ENCODE measurements at regions of chr5 and their contacts with region 1.

Region 1: GRCh38 chr5:25701936-25702335 is 1057.2 kb upstream of the CDH10 start:
- DNase-seq: no peak

Region 2: DNA sequence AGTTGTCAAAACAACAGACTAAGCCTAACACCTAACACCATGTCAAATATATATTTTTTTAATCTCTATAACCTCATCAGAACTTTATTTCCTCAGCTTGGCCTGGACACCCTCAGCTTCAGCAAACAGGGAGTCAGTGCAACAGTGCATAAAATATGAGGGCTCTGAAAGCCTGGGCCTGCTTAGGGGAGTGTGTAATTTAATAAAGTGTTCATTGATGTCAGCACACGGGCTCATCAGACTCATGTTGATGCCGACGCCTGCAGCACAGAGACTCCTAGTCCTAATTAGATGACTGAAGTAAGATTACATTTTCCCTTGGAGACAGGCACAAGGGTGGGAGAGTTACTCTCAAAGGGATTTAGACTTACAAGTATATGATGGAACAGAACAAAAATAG is 1095.0 kb before region 1 on chr5:
- intact Hi-C with region 1: no loop called
- DNase-seq: no peak

Region 3: GRCh38 chr5:25489834-25490538 is 211.9 kb before region 1 on chr5:
- intact Hi-C with region 1: no loop called
- DNase-seq: no peak

Region 4: DNA sequence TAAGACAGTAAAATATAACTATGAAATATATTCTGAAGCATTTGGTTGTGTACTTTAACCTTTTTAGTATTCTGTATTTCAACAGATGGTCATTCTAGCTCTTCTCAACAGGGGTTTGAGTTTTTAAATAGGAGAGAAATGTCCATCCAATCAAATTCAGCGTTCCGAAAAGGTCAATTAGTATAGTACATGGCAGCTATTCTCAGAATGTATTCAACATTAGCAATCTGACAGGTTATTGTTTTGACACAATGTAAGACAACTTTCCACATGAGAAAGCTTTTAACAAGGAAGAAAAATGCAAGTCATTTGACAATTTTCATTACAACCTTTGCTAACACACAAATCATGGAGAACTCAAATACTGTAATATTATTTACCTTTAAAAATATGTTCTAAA is 60.8 kb before region 1 on chr5:
- intact Hi-C with region 1: loop called in 1 of 2 experiments (anchors 2 kb)
- DNase-seq: no peak